PC-3 (cell line): ENCODE measurements at regions of chr14 and their contacts with region 1.

Region 1: GRCh38 chr14:76647697-76648298 is 113.5 kb upstream of the VASH1 start:
- DNase-seq: peak; percentile 71
- ATAC-seq: peak; percentile 83
- H3K4me3 ChIP-seq: no peak overlapping the region
- H3K27ac ChIP-seq: no peak overlapping the region
- H3K4me1 ChIP-seq: no peaks in the 10 kb centered on the region
- H3K27me3 ChIP-seq: peaks cover 53% of the 10 kb centered on the region; the same call in 1 of the 2 replicates
- CTCF ChIP-seq: peak; percentile 89

Region 2: DNA sequence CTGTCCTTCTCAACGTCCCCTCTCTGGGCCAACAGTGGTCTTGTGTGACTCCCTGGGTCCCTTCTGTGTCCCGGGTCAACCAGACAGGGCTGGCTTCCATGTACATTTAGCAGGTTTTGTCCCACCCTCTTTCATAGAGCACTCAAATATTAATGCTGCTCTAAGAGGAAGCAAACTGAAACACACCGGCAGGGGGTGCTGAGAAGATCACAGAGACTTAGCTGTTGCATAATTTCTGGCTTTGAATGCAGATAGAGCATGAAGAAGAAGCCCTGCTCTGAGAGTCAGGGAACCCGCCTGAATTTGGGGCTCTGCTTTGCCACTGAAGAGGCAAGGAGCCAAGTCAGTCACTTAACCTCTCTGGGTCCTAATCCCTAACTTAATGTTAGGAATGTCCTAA is 133.2 kb before region 1 on chr14:
- CTCF ChIA-PET with region 1: no interaction called
- POLR2A ChIA-PET with region 1: no interaction called
- intact Hi-C with region 1: loop called (anchors 10 kb)
- DNase-seq: peak; percentile 40
- ATAC-seq: no peak
- H3K4me3 ChIP-seq: no peak overlapping the region
- H3K27ac ChIP-seq: no peak overlapping the region
- H3K4me1 ChIP-seq: no peaks in the 10 kb centered on the region
- H3K27me3 ChIP-seq: peaks cover 68% of the 10 kb centered on the region
- CTCF ChIP-seq: peak; percentile 54

Region 3: DNA sequence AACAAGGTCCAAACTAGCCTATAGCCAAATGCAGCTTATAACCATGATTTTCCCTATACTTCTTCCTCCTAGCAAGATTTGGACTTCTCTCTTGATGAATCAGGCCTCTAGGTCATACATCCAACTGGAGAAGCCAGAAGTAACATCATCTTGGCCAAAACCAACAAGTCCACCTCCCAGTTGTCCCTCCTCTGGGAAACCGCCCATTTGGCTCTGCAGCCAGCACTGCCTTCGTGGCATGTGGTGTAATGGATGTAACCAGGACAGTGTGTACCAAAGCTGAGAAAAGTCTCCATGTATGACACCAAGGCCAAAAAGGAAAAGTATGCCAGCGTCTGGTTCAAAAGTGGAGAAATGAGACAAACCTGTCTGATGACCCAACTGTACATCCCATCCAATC is 54.2 kb after region 1 on chr14:
- CTCF ChIA-PET with region 1: no interaction called
- POLR2A ChIA-PET with region 1: no interaction called
- intact Hi-C with region 1: no loop called
- DNase-seq: no peak
- ATAC-seq: no peak
- H3K4me3 ChIP-seq: no peak overlapping the region
- H3K27ac ChIP-seq: no peak overlapping the region
- H3K4me1 ChIP-seq: no peaks in the 10 kb centered on the region
- H3K27me3 ChIP-seq: peaks cover 37% of the 10 kb centered on the region; the same call in 1 of the 2 replicates
- CTCF ChIP-seq: no peak